Activated CD8-positive, alpha-beta memory T cell treated with anti-CD3 and anti-CD28 coated beads, Interleukin-2, amount 10 ng/mL, durations not matched to agents 7 days and 5 days (primary cell): ENCODE measurements at regions of chr5 and their contacts with region 1.

Region 1: GRCh38 chr5:38441453-38442246 is 114.8 kb downstream of the LIFR start:
- DNase-seq: peak; percentile 89
- ATAC-seq: peak; percentile 99
- H3K4me3 Mint-ChIP-seq: no peak overlapping the region
- H3K27ac Mint-ChIP-seq: no peak overlapping the region
- H3K4me1 Mint-ChIP-seq: peaks cover 1% of the 10 kb centered on the region
- H3K27me3 Mint-ChIP-seq: peaks cover 47% of the 10 kb centered on the region

Region 2: DNA sequence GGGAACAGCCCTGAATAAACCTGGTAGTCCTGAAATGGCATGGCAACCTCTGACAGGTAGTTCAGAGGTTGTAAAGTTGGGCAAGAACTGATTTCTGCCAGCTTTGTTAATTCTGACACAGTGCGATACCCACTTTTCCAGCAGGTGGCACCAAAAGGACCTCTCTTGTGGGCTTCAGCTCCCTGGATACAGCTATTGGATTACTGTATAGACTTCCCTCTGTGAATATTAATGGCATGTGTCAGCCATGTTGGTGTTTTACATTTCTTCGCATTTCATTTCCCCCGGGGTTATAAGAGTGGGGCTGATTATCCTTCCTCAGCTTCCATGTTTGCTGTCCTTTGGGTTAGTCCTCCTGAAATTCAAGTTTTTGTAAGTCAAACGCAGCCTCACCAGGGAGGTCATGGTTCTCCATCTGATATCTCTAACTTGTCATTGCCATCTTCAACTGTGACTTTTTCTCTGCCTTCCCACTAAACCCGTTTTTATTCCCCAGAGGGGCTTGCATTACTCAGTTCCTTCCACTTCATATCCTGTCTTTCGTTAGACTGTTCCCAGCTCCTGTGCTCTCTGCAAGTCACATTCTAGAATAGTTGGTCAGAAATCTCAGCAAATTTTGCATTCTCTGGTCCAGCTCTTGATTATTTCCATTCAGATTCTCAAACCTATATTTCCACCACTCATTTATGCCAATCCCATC is 20.8 kb before region 1 on chr5:
- CTCF ChIA-PET with region 1: interaction called, 41 read pairs
- DNase-seq: peak; percentile 51
- ATAC-seq: no peak
- H3K4me3 Mint-ChIP-seq: no peak overlapping the region
- H3K27ac Mint-ChIP-seq: no peak overlapping the region
- H3K4me1 Mint-ChIP-seq: no peaks in the 10 kb centered on the region
- H3K27me3 Mint-ChIP-seq: peaks cover 43% of the 10 kb centered on the region

Region 3: GRCh38 chr5:38453506-38453905 is 11.9 kb after region 1 on chr5:
- CTCF ChIA-PET with region 1: interaction called, 60 read pairs
- DNase-seq: peak; percentile 83
- ATAC-seq: peak; percentile 93
- H3K4me3 Mint-ChIP-seq: peak overlapping the region; percentile 19
- H3K27ac Mint-ChIP-seq: peak overlapping the region; percentile 81
- H3K4me1 Mint-ChIP-seq: peaks cover 27% of the 10 kb centered on the region
- H3K27me3 Mint-ChIP-seq: peaks cover 87% of the 10 kb centered on the region

Region 4: GRCh38 chr5:38666668-38667498 is 225.2 kb after region 1 on chr5:
- CTCF ChIA-PET with region 1: interaction called, 10 read pairs
- DNase-seq: no peak
- ATAC-seq: no peak
- H3K4me3 Mint-ChIP-seq: no peak overlapping the region
- H3K27ac Mint-ChIP-seq: no peak overlapping the region
- H3K4me1 Mint-ChIP-seq: no peaks in the 10 kb centered on the region
- H3K27me3 Mint-ChIP-seq: peaks cover 16% of the 10 kb centered on the region

Region 5: DNA sequence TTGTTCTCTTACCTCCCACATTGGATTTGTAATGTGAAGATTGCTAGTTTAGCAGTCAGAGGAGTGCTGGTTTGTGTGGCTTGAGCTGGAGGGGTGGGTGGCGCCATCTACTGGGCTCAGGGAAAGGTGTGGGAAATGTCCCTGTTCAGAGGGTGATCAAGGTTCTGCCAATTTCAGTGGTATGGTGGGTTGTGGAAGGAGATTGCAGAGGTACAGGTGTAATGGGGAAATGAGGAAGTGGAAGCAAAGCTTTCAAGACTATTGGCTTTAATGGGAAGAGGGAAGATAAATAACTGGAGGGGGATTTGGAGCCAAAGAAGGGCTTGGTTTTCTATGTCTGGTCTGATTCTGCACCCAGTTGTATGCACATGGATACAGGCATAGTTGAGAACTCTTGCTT is 480.5 kb after region 1 on chr5:
- CTCF ChIA-PET with region 1: interaction called, 18 read pairs
- DNase-seq: peak; percentile 62
- ATAC-seq: peak; percentile 64
- H3K4me3 Mint-ChIP-seq: no peak overlapping the region
- H3K27ac Mint-ChIP-seq: no peak overlapping the region
- H3K4me1 Mint-ChIP-seq: no peaks in the 10 kb centered on the region
- H3K27me3 Mint-ChIP-seq: peaks cover 54% of the 10 kb centered on the region